Activated T-helper 1 cell treated with anti-CD3 and anti-CD28 coated beads, Interleukin-12 subunit alpha, Interleukin-12 subunit beta, Interleukin-2, Interleukin-4 antibody, amounts not matched to agents 30 ng/mL and 10 ng/mL and 1 ng/mL, durations not matched to agents 14 hours and 24 hours and 36 hours (primary cell): ENCODE measurements at regions of chr2 and their contacts with region 1.

Region 1: GRCh38 chr2:11344342-11344955 is at the start of gene ROCK2:
- DNase-seq: peak; percentile 62
- H3K4me3 Mint-ChIP-seq: peak within 1 kb of the TSS; percentile 99
- H3K27ac Mint-ChIP-seq: peak within 1 kb of the TSS; percentile 95
- H3K4me1 Mint-ChIP-seq: peaks cover 35% of the 10 kb centered on the region
- H3K27me3 Mint-ChIP-seq: peaks cover 14% of the 10 kb centered on the region
- total RNA-seq, gene ROCK2: 20.5 and 21.7 TPM in 2 replicates

Region 2: GRCh38 chr2:11154923-11155380 is 189.5 kb before region 1 on chr2:
- intact Hi-C with region 1: loop called (anchors 1 kb)
- DNase-seq: peak; percentile 94
- H3K4me3 Mint-ChIP-seq: peak overlapping the region; percentile 85
- H3K27ac Mint-ChIP-seq: peak overlapping the region; percentile 83
- H3K4me1 Mint-ChIP-seq: peaks cover 12% of the 10 kb centered on the region
- H3K27me3 Mint-ChIP-seq: peaks cover 7% of the 10 kb centered on the region

Region 3: GRCh38 chr2:11234309-11234708 is 110.1 kb before region 1 on chr2:
- intact Hi-C with region 1: loop called (anchors 2 kb)
- DNase-seq: no peak
- H3K4me3 Mint-ChIP-seq: no peak overlapping the region
- H3K27ac Mint-ChIP-seq: no peak overlapping the region
- H3K4me1 Mint-ChIP-seq: peaks cover 8% of the 10 kb centered on the region
- H3K27me3 Mint-ChIP-seq: no peaks in the 10 kb centered on the region

Region 4: GRCh38 chr2:11270891-11271290 is 73.6 kb before region 1 on chr2:
- intact Hi-C with region 1: loop called (anchors 5 kb)
- DNase-seq: no peak
- H3K4me3 Mint-ChIP-seq: no peak overlapping the region
- H3K27ac Mint-ChIP-seq: peak overlapping the region; percentile 75
- H3K4me1 Mint-ChIP-seq: peaks cover 20% of the 10 kb centered on the region
- H3K27me3 Mint-ChIP-seq: no peaks in the 10 kb centered on the region

Region 5: GRCh38 chr2:11305958-11306357 is 38.5 kb before region 1 on chr2:
- intact Hi-C with region 1: no loop called
- DNase-seq: no peak
- H3K4me3 Mint-ChIP-seq: no peak overlapping the region
- H3K27ac Mint-ChIP-seq: no peak overlapping the region
- H3K4me1 Mint-ChIP-seq: no peaks in the 10 kb centered on the region
- H3K27me3 Mint-ChIP-seq: no peaks in the 10 kb centered on the region

Region 6: DNA sequence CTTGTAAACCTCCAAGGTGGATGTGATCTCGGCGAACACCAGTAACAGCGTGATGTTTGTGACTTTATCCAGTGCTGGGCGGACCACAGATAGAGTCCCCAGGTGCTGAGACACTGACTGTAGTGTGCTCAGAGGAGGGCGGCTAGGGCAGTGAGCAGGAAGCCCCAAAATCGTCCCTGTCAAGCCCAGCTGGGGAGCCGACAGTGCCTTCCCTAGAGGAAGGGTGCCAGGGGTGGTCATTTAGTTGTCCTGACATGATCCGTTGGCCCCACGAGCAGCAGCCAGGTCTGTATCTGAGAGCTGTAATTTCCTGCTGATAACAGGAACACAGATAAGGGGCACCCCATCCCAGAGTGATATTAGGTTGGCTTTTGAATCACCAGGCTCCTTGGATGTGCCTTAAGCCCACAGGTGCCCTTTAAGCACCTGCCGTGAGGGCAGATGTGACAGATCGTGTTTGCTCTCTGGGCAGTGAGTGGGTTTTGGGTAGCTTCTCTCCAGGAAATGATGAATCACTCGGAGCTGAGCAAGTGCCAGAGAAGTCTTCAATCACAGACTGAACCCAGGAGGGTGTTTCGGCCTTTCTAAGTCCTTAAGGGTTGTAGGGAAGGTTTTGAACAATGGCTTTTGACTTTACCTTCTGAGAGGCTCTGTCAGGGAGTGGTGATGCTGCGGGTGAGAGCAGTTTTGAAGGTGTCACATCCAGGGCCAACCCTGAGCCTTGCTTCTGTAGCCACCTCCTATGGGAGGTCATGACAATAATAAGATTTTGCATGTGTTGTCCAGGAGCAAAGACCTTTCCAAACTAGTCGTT is 409.6 kb after region 1 on chr2:
- intact Hi-C with region 1: loop called (anchors 10 kb)
- DNase-seq: peak; percentile 57
- H3K4me3 Mint-ChIP-seq: peak overlapping the region; percentile 69
- H3K27ac Mint-ChIP-seq: peak overlapping the region; percentile 82
- H3K4me1 Mint-ChIP-seq: peaks cover 85% of the 10 kb centered on the region
- H3K27me3 Mint-ChIP-seq: no peaks in the 10 kb centered on the region